Right ventricle myocardium inferior (tissue), 1 donor: ENCODE measurements at regions of chr6 and their contacts with region 1.

Region 1: DNA sequence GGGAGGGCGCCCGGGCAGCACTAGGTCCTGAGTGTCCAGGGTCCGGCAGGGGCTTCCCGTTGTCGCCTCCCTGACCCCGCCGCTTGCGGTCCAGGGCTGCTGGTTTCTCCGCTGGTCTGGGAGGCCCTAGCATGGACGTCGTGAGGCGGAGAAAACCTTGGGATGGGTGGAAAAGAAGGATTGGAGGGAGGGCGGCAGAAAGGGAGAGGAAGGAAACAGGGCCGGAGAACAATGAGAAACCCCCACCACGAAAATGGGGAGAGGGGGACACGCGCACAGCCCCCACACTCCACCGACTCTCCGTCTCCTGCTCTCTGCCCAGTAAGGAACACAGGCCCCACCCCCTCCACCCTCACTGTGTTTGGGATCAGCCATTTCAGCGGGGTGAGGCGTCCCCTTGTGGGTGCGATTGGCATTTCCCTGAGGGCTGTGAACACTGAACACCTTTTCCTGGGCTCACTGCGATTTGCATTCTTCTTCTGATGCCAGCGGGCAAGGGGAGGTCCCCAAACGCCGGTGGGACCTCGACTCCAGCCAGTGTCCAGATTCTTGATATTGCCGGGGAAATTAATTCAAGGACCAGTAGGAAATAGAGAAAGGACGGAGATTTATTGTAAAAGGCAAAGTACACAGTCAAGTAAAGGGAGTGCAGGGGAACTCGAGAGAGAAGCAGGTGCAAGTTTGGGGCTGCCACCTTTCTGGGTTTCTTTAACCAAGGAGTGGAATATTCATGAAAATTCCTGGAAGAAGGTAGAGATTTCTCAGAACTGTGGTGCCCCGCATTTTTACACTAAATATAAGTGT is 3.3 kb upstream of the RAET1G start:
- DNase-seq: peak; percentile 93
- ATAC-seq: peak; percentile 93

Region 2: DNA sequence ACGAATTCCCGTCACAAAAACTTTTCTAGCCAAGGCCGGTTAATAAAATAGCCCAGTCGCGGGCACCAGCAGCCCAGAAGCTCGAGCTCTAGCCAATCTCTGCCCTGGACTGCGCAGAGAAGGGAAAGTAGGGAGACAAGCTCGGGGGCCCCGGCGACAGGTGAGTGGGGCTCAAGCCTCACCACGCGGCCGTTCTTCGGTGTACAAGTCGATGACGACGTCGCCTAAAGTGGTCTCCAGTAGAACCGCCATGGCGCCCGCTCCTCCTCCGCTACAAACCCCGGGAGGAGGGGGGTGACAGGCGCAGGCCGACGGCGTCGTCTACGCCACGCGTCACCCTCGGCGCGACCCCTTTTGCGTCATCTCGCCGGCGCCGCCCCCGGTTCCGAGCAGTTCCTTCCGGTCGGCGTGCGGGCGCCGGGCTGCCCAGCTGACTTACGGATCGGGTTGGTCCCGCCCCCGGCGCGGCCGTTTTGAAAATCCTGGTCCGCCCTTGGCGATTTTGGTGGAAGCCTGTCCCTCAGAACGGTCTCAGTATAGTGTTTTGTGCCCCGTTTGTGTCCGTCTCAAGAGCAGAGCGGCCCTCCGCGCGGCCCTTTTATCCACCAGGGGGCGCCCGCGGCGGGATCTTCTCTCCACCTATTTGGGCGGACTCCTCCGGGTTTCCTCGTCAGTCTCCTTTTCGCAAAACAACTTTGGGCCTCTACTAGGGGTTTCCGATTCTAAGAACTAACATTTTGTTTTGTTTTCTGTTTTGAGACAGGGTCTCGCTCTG is 380.2 kb before region 1 on chr6 and contains the start of gene PPIL4:
- intact Hi-C with region 1: loop called (anchors 5 kb)
- DNase-seq: peak; percentile 99
- ATAC-seq: peak; percentile 98
- total RNA-seq, gene PPIL4: 15.3 TPM

Region 3: GRCh38 chr6:149723771-149724417 is 202.3 kb before region 1 on chr6:
- intact Hi-C with region 1: loop called (anchors 5 kb)
- DNase-seq: no peak
- ATAC-seq: peak; percentile 86

Region 4: DNA sequence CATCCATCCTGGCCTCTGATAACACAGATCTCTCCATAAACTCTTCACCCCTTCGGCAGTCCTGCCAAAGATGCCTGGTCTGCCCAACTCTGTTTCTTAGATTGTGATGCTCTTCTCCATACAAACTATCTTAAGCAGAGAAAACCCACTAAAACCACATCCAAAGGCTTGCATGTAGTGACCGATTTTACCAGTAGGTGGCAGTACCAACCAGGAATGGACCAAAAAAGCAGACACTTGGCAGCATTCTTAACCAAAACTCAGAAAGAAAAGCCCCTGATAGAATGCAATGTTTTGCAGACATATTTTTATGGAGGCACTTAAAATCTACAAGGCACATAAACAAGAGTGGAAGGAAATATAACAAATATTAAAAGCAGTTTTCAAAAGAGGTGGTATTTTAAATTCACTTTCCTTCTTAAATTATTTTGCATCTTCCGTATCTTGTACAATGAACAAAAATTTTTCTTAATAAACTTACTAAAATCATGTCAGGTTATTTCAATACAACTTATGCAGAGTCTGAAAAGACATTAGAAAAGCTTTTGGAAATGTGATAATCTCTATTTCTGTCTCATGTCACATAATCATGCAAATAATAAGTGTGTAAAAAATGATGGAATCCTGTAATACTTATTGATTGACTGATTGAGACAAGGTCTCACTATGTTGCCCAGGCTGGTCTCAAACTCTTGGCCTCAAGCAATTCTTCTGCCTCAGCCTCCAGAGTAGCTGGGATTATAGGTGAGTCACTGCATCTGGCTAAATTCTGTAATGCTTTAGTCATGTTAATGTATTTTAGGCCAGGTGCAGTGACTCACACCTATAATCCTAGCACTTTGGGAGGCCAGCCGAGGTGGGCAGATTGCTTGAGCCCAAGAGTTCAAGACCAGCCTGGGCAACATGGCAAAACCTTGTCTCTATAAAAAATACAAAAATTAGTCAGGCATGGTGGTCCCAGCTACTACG is 91.4 kb before region 1 on chr6:
- intact Hi-C with region 1: loop called (anchors 1 kb)
- DNase-seq: no peak
- ATAC-seq: no peak

Region 5: DNA sequence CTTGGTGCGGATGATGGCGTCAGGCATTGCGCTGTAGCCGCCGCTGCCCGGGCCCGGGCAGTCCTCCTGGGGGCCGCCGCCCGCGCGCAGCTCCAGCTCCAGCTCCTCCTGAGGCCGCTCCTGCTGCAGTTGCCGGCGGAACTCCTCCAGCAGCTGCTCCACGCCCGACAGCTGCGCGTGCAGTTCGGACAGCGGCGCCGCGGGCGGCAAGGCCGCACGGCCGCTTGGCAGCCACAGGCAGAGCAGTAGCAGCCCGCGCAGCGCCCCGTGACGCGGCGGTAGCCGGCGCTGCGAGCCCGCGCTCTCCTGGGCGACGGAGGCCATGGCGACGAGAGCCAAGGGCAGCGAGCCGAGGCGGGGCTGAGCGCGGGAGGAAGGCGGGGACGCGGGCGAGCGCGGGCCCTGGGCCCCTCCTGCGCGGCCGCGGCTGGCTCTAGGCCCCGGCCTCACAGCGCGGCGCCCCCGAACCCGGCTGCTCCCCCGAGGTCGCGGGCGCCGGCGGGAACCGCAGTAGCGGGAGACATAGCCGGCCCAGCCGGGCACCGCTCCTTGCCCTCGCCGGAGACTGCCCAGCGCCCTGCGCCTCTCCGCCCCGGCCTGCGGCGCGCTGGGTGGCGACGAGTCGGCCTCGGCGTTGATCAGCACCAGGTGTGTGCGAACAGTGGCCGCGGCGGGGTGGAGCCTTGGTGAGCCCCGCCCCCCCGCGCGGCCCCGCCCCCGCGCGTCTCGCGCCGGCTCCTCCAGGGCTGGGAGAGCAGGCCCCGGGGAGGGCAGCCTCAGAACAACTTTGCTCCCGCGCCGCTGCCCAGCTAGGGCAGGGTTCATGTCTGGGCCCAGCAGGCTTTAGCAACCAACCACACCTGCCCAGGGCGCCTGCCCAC is 62.2 kb before region 1 on chr6 and contains the start of gene LRP11:
- intact Hi-C with region 1: loop called (anchors 10 kb)
- DNase-seq: peak; percentile 92
- ATAC-seq: peak; percentile 92
- total RNA-seq, gene LRP11: 21.5 TPM

Region 6: GRCh38 chr6:149887343-149887742 is 38.8 kb before region 1 on chr6:
- intact Hi-C with region 1: loop called (anchors 5 kb)
- DNase-seq: no peak
- ATAC-seq: no peak